ENCODE measurements at regions of chr1 and their contacts with region 1.

Region 1: DNA sequence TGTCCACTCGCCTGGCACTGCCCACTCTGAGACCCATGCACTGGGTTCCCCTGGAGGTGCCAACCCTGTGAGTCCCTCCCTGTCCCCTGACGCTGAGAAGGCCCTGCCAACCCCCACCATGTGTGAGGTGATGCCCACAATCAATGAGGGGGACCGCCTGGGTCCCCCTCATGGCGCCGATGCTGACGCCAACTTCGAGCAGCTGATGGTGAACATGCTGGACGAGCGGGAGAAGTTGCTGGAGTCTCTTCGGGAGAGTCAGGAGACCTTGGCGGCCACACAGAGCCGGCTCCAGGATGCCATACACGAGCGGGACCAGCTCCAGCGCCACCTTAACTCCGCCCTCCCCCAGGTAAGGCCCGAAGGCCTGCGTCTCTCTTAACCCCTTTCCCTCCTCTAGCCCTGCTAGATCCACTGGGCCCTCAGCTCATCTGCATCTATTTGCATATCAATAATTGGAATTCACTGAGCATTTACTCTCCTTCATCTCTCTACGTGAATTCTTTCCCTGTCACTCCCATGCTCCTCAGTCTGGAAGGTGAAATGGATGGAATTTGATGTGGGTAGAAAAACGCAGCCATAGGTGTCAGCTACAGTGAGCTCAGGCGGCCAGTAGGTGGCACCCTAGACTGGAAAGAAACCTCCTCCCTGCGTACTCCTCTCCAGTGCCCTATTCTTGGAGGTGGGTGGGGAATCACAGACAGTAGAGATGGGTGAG is 12.8 kb downstream of the PPFIA4 start:
- DNase-seq: peak; percentile 61
- H3K4me3 ChIP-seq: no peak overlapping the region
- H3K27ac ChIP-seq: no peak overlapping the region
- H3K4me1 ChIP-seq: peaks cover 25% of the 10 kb centered on the region
- H3K27me3 ChIP-seq: no peaks in the 10 kb centered on the region
- CTCF ChIP-seq: peak; percentile 92 to 96

Region 2: GRCh38 chr1:203006948-203007871 is 31.8 kb before region 1 on chr1 and contains the start of gene TMEM183A:
- CTCF ChIA-PET with region 1: no interaction called
- dilution Hi-C with region 1: no loop called
- in situ Hi-C with region 1: no loop called
- intact Hi-C with region 1: no loop called
- DNase-seq: peak; percentile 95
- H3K4me3 ChIP-seq: peak within 1 kb of the TSS; percentile 72 to 96 (median 87)
- H3K27ac ChIP-seq: peak within 1 kb of the TSS; percentile 84
- H3K4me1 ChIP-seq: peaks cover 10% of the 10 kb centered on the region
- H3K27me3 ChIP-seq: no peaks in the 10 kb centered on the region
- CTCF ChIP-seq: no peak
- total RNA-seq, gene TMEM183A: 58.1 to 97.4 TPM

Region 3: DNA sequence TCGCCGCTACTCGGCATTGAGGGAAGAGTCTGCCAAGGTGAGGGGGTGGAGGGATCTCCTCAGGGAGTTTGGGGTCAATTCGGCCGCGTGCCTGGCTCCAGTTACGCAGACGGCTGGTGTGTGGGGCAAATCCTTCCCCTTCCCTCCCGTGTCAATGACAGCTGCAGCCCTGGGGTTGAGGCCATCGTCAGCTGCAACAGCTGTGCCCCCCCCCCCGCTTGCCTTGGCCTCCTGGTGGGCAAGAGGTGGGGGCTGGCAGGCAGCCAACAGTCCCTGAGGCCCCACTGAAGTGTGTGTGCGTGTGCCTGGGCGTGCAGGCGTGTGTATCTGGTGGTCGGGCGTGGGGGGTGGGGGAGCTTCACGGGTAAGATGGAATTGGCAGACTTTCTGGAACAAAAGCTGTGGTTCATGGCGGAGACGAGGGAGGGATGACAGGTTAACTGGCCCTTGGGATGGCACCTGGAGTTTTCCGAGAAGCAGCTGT is 12.8 kb after region 1 on chr1:
- CTCF ChIA-PET with region 1: interaction called, 14 read pairs
- dilution Hi-C with region 1: no loop called
- in situ Hi-C with region 1: no loop called
- intact Hi-C with region 1: no loop called
- DNase-seq: no peak
- H3K4me3 ChIP-seq: no peak overlapping the region
- H3K27ac ChIP-seq: no peak overlapping the region
- H3K4me1 ChIP-seq: peaks cover 8% of the 10 kb centered on the region
- H3K27me3 ChIP-seq: no peaks in the 10 kb centered on the region
- CTCF ChIP-seq: no peak

Region 4: GRCh38 chr1:203117611-203118575 is 78.8 kb after region 1 on chr1:
- CTCF ChIA-PET with region 1: no interaction called
- dilution Hi-C with region 1: loop called (anchors 5 kb)
- in situ Hi-C with region 1: no loop called
- intact Hi-C with region 1: loop called (anchors 1 kb)
- DNase-seq: peak; percentile 43
- H3K4me3 ChIP-seq: no peak overlapping the region
- H3K27ac ChIP-seq: no peak overlapping the region
- H3K4me1 ChIP-seq: no peaks in the 10 kb centered on the region
- H3K27me3 ChIP-seq: peaks cover 13% of the 10 kb centered on the region
- CTCF ChIP-seq: peak; percentile 58 to 83

Region 5: DNA sequence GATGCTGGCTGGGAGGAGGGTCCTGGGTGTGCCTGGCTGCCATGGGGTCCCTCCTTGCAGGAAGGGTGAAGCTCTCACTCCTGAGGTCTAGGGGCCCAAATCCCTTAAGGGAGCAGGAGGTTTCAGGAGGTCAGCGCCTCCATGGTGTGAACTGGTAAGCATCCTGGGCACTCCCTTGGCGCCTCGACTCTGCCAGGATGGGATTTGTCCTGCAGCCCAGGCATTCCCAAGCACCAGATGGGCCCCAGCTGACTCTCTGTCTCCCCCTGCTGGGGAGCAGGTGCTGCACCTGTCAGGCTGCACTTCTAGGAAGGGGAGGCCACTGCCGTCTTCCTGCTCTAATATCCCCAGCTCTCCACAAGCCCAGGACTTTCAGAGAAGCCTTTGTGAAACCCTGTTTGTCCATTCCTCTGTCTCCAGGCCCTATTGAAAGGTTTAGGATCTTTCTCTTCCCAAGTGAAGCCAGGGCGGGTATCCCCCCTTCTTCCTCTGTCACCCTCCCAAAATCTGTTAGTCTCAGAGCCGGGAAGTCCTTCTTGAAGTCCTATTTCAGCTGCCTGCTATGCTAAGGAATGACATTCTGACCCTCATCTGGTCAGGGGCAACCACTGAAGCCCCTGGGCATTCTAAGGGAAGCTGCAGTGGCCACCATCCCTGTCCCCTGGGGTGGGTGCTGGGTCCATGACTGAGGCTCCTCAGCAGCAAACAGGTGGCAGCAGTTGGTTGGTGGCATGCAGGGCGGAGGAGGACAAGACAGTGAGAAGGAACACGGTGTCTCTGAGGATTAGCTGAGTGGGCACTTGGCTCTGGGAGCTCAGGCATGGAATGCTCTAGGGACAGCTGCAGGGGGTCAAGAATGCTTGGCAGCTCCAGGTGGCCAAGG is 133.3 kb after region 1 on chr1:
- CTCF ChIA-PET with region 1: interaction called, 8 read pairs
- dilution Hi-C with region 1: no loop called
- in situ Hi-C with region 1: loop called in 1 of 2 experiments (anchors 10 kb)
- intact Hi-C with region 1: loop called (anchors 1 kb)
- DNase-seq: peak; percentile 40
- H3K4me3 ChIP-seq: no peak overlapping the region
- H3K27ac ChIP-seq: no peak overlapping the region
- H3K4me1 ChIP-seq: peaks cover 5% of the 10 kb centered on the region
- H3K27me3 ChIP-seq: no peaks in the 10 kb centered on the region
- CTCF ChIP-seq: peak; percentile 97 to 98

Region 6: GRCh38 chr1:203267347-203267846 is 228.3 kb after region 1 on chr1:
- CTCF ChIA-PET with region 1: interaction called, 9 read pairs
- dilution Hi-C with region 1: loop called (anchors 10 kb)
- in situ Hi-C with region 1: loop called in 1 of 2 experiments (anchors 5 kb)
- intact Hi-C with region 1: loop called (anchors 1 kb)
- DNase-seq: peak; percentile 78
- H3K4me3 ChIP-seq: peak overlapping the region; percentile 12 to 52 (median 52)
- H3K27ac ChIP-seq: peak overlapping the region; percentile 1
- H3K4me1 ChIP-seq: peaks cover 2% of the 10 kb centered on the region
- H3K27me3 ChIP-seq: no peaks in the 10 kb centered on the region
- CTCF ChIP-seq: peak; percentile 92 to 94